Activated naive CD4-positive, alpha-beta T cell treated with anti-CD3 and anti-CD28 coated beads for 36 hours (primary cell): ENCODE measurements at regions of chr17 and their contacts with region 1.

Region 1: DNA sequence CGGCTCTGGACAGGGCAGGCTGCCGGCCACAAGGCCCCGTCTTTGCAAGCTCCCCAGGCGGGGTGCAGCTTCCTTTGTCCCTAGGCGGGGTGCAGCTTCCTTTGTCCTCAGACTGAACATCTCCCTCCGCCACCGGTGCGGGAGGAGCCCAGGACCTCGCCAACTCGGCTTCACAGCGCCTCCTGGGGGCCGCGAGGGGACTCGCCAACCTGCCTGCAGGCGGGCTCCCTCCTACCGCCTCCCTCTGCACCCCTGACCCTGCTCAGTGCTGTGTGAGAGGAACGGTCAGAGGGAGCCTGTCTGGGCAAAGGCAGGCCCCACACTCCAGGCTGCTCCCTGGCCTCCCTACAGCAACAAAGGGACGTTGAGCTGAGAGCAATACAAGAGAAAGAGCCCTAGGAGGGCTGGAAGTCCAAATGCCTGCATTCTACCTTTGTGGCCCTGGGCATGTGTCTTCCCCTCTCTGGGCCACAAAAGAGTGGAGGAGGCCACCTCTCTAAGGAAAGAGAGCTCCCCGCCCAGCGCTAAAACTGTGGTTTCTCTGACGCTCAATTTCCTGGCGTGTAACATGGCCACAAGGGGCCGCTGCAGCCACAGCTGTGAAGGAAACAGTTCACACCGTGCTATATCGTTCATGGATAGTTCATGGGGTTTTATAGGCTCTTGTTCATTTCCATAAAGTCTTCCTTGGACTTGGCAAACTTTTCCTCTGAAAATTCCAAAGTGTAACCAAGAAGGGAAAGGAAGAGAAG is 20.9 kb upstream of the KRT19 start:
- DNase-seq: peak; percentile 94
- H3K4me3 Mint-ChIP-seq: no peak overlapping the region
- H3K27ac Mint-ChIP-seq: no peak overlapping the region
- H3K4me1 Mint-ChIP-seq: peaks cover 18% of the 10 kb centered on the region
- H3K27me3 Mint-ChIP-seq: no peaks in the 10 kb centered on the region

Region 2: GRCh38 chr17:40854159-40854814 is 694.7 kb before region 1 on chr17:
- CTCF ChIA-PET with region 1: interaction called, 5 read pairs
- intact Hi-C with region 1: loop called (anchors 1 kb)
- DNase-seq: no peak
- H3K4me3 Mint-ChIP-seq: no peak overlapping the region
- H3K27ac Mint-ChIP-seq: no peak overlapping the region
- H3K4me1 Mint-ChIP-seq: peaks cover 2% of the 10 kb centered on the region
- H3K27me3 Mint-ChIP-seq: peaks cover 5% of the 10 kb centered on the region

Region 3: GRCh38 chr17:41322094-41322902 is 226.7 kb before region 1 on chr17:
- CTCF ChIA-PET with region 1: interaction called, 7 read pairs
- intact Hi-C with region 1: loop called (anchors 5 kb)
- DNase-seq: peak; percentile 28
- H3K4me3 Mint-ChIP-seq: no peak overlapping the region
- H3K27ac Mint-ChIP-seq: no peak overlapping the region
- H3K4me1 Mint-ChIP-seq: peaks cover 37% of the 10 kb centered on the region
- H3K27me3 Mint-ChIP-seq: no peaks in the 10 kb centered on the region

Region 4: DNA sequence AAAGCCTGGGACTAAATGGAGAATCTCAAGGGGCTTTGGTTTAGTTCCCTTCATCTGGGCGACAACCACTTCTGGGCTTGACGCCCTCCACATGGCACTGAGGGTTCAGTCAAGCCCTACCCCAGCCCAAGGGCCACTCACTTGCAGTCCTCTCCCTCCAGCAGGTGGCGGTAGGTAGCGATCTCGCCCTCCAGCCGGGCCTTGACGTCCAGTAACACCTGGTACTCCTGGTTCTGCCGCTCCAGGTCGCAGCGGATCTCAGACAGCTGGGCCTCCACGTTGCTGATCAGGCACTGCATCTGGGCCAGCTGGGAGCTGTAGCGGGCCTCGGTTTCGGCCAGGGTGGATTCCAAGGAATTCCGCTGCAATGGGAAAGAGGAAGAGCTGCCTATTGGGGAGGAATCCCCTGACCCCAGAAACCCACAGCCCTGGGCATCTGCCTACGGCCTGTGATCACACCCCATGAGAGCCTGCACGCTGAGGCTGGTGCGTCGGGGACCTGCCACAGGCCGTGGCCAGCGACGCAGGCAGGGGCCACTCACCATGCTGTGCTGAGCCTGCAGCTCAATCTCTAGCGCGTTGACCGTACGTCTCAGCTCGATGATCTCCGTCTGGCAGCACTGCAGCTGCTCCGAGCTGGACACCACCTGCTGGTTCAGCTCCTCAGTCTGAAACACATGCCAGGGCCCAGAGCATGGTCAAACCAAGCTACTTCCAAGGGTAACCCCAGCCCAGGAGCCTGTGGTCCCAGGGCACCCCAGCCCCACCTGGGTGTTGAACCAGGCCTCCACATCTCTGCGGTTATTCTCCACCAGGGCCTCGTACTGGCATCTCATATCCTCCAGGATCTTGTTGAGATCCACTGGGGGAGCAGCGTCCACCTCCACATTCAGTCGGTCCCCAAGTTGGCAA is 62.0 kb before region 1 on chr17:
- CTCF ChIA-PET with region 1: interaction called, 19 read pairs
- intact Hi-C with region 1: no loop called
- DNase-seq: peak; percentile 53
- H3K4me3 Mint-ChIP-seq: no peak overlapping the region
- H3K27ac Mint-ChIP-seq: no peak overlapping the region
- H3K4me1 Mint-ChIP-seq: peaks cover 6% of the 10 kb centered on the region
- H3K27me3 Mint-ChIP-seq: peaks cover 2% of the 10 kb centered on the region

Region 5: GRCh38 chr17:41530062-41531051 is 18.7 kb before region 1 on chr17:
- CTCF ChIA-PET with region 1: interaction called, 12 read pairs
- intact Hi-C with region 1: no loop called
- DNase-seq: no peak
- H3K4me3 Mint-ChIP-seq: no peak overlapping the region
- H3K27ac Mint-ChIP-seq: no peak overlapping the region
- H3K4me1 Mint-ChIP-seq: peaks cover 2% of the 10 kb centered on the region
- H3K27me3 Mint-ChIP-seq: peaks cover 43% of the 10 kb centered on the region

Region 6: DNA sequence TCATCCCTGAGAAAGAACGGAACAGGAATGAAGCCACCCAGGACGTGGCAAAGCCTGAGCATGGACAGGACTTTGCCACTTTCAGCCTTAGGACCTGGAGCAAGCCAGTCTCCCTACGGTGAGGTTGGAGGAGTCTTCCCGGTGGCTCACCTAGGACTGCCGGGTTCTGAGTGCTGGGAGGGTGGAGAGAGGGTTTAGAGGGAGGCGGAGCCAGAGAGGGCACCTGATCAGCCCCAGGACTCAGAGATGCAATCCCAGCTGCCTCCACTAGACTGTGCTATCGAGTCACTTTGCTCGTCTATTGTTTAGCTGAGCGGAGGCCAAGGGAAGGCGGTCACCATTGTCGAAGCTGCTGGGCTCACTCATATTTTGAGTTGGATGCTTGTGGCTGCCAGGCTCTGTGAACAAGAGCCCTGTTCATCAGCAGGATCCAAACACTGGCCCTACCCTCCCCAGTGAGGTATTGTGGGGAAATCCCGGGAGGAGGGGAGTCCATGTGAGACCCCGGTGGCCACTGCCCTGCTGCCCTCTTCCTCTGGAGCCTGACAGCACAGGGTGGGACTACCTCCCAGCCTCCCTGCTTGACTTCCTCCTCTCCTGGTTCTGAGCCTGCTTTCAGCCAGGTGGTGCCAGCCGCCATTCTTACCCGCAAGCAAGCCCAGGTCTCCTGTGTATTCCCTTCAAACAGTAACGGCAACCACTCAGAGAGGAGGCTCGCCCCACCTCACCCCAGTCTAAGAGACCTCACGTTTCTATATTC is 30.6 kb after region 1 on chr17:
- CTCF ChIA-PET with region 1: interaction called, 13 read pairs
- intact Hi-C with region 1: no loop called
- DNase-seq: peak; percentile 91
- H3K4me3 Mint-ChIP-seq: no peak overlapping the region
- H3K27ac Mint-ChIP-seq: no peak overlapping the region
- H3K4me1 Mint-ChIP-seq: no peaks in the 10 kb centered on the region
- H3K27me3 Mint-ChIP-seq: peaks cover 35% of the 10 kb centered on the region

Region 7: DNA sequence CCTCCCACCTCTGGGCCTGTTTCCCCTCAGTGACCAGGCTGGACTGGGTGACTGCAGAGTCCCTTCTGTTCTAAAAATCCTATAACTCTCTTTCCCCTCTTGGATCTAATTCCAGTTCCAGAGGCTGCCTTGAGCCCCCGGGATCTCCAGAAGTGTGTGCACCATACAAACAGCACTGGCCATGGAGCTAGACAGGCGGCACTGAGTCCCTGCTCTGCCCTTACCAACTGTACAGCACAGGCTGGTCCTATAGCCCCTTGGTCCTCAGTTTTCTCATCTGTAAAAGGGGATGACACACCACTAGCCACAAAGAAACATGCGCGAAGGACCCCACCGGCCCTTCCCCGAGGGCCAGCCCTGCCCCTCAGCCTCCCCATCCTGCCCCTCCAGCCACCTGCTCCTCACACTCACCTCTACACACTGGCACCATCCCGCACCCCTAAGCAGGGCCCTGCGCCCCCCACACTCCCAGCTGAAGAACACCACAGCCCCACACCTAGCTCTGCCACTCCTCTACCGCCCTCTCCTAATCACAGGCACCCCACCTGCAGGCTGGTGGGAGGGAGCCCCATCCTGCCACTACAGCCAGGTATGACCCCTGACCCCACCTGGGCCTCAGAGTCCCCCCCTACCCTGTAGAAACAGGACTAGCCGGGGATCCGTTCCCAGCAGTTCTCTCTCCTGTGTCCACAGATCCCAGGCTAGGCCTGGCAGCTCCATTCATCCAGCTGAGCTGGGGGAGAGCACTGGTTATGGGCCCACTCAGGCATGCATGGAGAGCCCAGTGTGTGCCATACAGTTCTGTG is 64.5 kb after region 1 on chr17:
- CTCF ChIA-PET with region 1: no interaction called
- intact Hi-C with region 1: no loop called
- DNase-seq: no peak
- H3K4me3 Mint-ChIP-seq: no peak overlapping the region
- H3K27ac Mint-ChIP-seq: no peak overlapping the region
- H3K4me1 Mint-ChIP-seq: no peaks in the 10 kb centered on the region
- H3K27me3 Mint-ChIP-seq: peaks cover 9% of the 10 kb centered on the region